Dendritic cell treated with granulocyte-macrophage colony-stimulating factor and Interleukin-4, amounts not matched to agents 40 ng/mL and 50 ng/mL, for 4 days (primary cell): ENCODE measurements at regions of chr16 and their contacts with region 1.

Region 1: DNA sequence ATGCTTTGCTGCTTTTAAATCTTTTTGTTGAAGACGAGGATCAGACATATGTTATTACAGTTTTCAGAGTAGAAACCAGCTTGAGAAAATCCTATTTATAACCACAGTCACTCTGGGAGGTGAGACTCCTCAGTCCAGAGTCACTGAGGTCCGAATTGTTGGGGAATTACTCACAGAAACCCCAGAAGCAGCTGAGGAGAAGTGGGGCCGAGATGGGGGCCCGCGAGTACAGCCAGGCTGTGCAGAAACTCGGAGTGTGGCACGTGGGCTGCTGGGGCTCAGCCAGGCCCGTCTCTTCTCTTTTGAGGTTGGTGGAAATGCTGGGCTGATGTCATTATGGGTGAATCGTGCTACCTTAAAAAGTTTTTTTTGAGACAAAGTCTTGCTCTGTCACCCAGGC is 14.4 kb upstream of the GNG13 start:
- H3K4me3 Mint-ChIP-seq: no peak overlapping the region
- H3K27ac Mint-ChIP-seq: no peak overlapping the region
- H3K4me1 Mint-ChIP-seq: no peaks in the 10 kb centered on the region
- H3K27me3 Mint-ChIP-seq: peaks cover 81% of the 10 kb centered on the region

Region 2: DNA sequence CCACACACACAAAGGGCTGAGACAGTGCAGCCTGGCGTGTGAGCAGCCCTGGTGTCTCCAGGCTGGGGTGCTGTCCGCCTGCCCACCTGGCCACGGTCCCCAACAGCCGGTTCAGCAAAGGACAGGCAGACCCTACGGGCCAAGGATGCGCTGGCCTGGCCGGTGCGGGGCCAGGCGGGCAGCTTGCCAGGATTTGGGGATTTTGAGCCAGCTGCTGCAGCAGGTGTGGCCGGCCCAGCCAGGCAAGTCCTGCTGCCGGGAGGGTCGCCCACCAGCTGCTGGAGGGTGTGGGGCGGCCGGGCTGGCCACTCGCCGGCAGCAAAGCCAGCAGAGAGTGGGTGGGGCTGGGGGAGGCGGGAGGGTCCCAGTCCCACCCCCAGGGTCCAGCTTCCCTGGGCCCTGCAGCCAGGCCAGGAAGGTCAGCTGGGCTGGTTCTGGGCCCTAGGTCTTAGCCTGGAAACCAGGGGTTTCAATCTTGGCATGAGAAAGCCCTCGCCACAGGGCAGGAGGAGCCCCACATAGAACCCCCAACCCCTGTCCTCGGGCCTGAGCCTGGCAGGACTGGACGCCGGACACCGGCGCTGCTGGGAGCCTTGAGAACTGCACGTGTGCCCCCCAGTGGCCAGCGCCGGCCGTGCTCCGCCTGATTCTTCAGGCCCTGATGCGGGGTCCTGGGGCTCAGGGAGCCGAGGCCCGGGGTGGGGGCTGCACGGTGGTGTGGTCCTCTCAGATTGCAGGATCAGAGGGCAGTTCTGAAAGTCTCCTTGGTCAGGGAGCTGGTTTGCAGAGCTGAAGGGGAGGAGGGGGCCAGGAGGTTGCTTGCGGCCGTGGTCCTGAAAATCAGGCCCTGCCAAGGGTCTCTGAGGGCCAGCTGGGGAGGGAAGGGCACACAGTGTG is 239.9 kb after region 1 on chr16:
- intact Hi-C with region 1: loop called (anchors 2 kb)
- H3K4me3 Mint-ChIP-seq: no peak overlapping the region
- H3K27ac Mint-ChIP-seq: no peak overlapping the region
- H3K4me1 Mint-ChIP-seq: no peaks in the 10 kb centered on the region
- H3K27me3 Mint-ChIP-seq: peaks cover 17% of the 10 kb centered on the region